ENCODE measurements at regions of chr11 and their contacts with region 1.

Region 1: DNA sequence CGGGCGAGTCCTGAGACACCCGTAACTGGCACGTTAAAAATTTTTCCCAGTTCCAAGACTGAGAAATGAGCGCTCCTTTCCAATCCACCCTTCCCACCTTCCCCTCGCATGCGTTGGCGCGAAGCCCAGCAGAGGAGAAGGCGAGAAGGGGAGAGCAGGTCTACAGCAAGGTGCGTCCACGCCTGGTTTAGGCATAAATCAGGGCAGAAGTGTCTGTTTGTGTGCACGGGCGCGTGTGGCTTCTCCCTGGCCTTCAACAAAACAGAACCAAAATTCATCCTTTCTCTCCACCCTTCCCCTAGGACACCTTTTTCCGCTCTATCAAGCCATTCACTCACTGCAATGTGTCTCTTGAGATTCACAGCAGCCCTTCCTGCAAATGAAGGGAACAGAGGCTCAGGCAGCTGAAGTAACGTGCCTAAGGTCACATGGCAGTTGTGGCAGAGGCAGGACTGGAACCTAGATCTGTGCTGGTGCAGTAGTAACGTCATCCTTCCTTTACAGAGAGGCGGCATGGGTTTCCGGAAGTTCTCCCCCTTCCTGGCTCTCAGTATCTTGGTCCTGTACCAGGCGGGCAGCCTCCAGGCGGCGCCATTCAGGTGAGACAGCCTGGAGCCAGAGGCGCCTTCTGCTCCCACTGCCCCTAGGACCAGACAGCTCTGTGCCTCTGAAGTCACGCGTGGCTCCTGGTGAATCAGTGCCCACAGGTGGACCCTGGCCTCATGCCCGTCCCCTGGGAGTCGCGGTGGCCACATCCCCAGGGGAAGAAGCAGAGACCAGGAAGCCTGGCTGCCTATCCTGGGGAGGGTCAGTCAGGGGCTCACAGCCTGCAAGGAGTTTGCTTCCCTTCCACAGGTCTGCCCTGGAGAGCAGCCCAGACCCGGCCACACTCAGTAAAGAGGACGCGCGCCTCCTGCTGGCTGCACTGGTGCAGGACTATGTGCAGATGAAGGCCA is 1.1 kb downstream of the CALCB start:
- DNase-seq: peak; percentile 78
- H3K4me3 Mint-ChIP-seq: peak overlapping the region; percentile 78
- H3K27ac Mint-ChIP-seq: peak overlapping the region; percentile 29
- H3K4me1 Mint-ChIP-seq: peaks cover 13% of the 10 kb centered on the region
- H3K27me3 Mint-ChIP-seq: peaks cover 34% of the 10 kb centered on the region

Region 2: DNA sequence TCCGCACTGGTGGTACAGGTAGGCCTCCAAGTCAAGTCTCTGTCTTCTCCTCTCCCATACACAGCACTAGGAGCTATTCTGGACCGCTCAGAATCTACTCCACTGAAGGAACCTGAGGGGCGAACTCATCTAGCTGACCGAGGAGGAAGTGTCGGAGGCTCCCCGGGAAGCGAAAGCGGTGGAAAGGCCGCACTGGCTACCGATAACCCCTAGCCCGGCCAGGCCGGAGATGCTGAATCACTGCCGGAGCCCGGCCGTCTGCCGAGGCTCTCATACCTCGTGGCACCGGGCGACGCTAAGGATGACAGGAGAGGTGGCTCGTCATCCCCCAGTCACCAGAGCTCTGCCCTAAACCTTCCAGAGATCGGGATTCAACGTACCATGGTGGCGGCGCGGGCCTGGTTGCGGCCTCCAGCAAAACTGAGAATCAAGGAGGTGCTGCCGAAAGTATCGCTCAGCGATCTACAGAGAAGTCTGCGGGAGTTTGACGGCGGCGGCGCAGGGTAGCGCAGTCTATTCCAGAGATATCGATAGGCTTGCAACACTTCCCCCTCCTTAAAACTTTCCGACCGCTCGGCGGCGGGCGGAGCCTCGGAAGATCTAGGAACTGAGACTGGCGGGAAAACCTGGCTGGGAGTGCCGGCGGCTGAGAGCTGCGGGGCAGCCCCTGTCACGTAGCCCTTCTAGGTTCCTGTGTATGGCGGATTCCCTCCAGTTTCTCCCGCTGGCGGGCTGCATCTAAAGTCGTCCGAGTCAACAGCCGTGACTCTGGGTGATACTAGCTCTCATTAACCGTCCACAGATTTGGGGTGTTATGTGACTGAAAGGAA is 554.4 kb before region 1 on chr11 and contains the start of gene PSMA1:
- intact Hi-C with region 1: loop called (anchors 10 kb)
- DNase-seq: peak; percentile 92
- H3K4me3 Mint-ChIP-seq: peak within 1 kb of the TSS; percentile 90
- H3K27ac Mint-ChIP-seq: peak within 1 kb of the TSS; percentile 89
- H3K4me1 Mint-ChIP-seq: peaks cover 27% of the 10 kb centered on the region
- H3K27me3 Mint-ChIP-seq: no peaks in the 10 kb centered on the region
- total RNA-seq, gene PSMA1: 319 and 329 TPM in 2 replicates

Region 3: GRCh38 chr11:14789879-14790484 is 284.5 kb before region 1 on chr11:
- intact Hi-C with region 1: loop called (anchors 5 kb)
- DNase-seq: no peak
- H3K4me3 Mint-ChIP-seq: no peak overlapping the region
- H3K27ac Mint-ChIP-seq: no peak overlapping the region
- H3K4me1 Mint-ChIP-seq: peaks cover 10% of the 10 kb centered on the region
- H3K27me3 Mint-ChIP-seq: no peaks in the 10 kb centered on the region

Region 4: DNA sequence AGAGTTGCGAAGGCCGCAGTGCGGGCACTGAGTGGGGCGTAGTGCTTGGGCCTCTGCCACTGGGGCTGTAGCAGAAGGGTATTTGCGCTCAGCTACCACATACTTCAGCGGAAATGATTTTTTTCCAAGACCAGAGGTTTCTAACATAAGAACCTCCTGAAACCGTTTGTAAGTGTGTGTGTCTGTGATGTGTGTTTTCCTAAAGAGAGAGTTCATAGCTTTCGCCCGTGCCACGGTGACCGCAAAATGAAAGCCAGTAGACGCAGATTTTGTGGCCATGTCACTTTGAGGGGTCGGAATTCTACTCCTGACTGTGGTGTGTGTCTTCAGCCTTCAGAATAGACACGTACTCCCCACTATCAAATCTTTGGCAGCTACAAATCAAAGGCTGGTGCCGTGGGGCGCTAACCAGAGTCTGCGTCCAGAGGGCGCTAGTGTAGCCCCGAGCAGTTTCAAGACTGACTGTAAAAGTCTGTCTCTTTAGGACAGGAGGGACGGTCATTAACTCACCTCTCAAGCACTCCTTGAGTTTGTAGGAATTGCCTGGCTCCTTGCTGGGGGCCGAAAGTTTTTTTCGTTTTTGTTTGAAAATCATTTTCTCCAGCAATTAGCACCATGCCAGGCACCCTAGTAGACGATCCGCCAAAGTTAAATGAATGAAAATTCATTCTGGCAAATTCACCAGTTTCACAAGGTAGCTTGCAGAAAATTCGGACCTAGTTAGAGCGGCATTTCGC is 99.8 kb before region 1 on chr11:
- intact Hi-C with region 1: loop called (anchors 1 kb)
- DNase-seq: peak; percentile 53
- H3K4me3 Mint-ChIP-seq: peak overlapping the region; percentile 33
- H3K27ac Mint-ChIP-seq: no peak overlapping the region
- H3K4me1 Mint-ChIP-seq: peaks cover 21% of the 10 kb centered on the region
- H3K27me3 Mint-ChIP-seq: peaks cover 75% of the 10 kb centered on the region

Region 5: GRCh38 chr11:15038963-15039362 is 35.5 kb before region 1 on chr11:
- intact Hi-C with region 1: loop called (anchors 1 kb)
- DNase-seq: no peak
- H3K4me3 Mint-ChIP-seq: no peak overlapping the region
- H3K27ac Mint-ChIP-seq: no peak overlapping the region
- H3K4me1 Mint-ChIP-seq: no peaks in the 10 kb centered on the region
- H3K27me3 Mint-ChIP-seq: peaks cover 23% of the 10 kb centered on the region

Region 6: GRCh38 chr11:15101072-15101709 is 26.7 kb after region 1 on chr11:
- intact Hi-C with region 1: no loop called
- DNase-seq: peak; percentile 26
- H3K4me3 Mint-ChIP-seq: no peak overlapping the region
- H3K27ac Mint-ChIP-seq: no peak overlapping the region
- H3K4me1 Mint-ChIP-seq: no peaks in the 10 kb centered on the region
- H3K27me3 Mint-ChIP-seq: peaks cover 32% of the 10 kb centered on the region

Measured in activated T-helper 2 cell treated with anti-CD3 and anti-CD28 coated beads, Interferon-gamma antibody, Interleukin-2, Interleukin-4, amounts not matched to agents 10 μg/mL and 5 μg/mL and 100 μg/mL, durations not matched to agents 14 hours and 24 hours and 36 hours (primary cell).